GM23248 (cell line): ENCODE measurements at regions of chr3 and their contacts with region 1.

Region 1: GRCh38 chr3:100761211-100761942 is 52.1 kb downstream of the TFG start:
- DNase-seq: no peak
- H3K4me3 ChIP-seq: no peak overlapping the region
- H3K27ac ChIP-seq: no peak overlapping the region
- H3K4me1 ChIP-seq: no peaks in the 10 kb centered on the region
- H3K27me3 ChIP-seq: no peaks in the 10 kb centered on the region

Region 2: GRCh38 chr3:100386437-100387074 is 374.8 kb before region 1 on chr3:
- in situ Hi-C with region 1: no loop called
- DNase-seq: no peak
- H3K4me3 ChIP-seq: no peak overlapping the region
- H3K27ac ChIP-seq: no peak overlapping the region
- H3K4me1 ChIP-seq: peaks cover 21% of the 10 kb centered on the region
- H3K27me3 ChIP-seq: no peaks in the 10 kb centered on the region

Region 3: GRCh38 chr3:101195951-101196713 is 434.8 kb after region 1 on chr3:
- in situ Hi-C with region 1: loop called (anchors 25 kb)
- DNase-seq: peak; percentile 80
- H3K4me3 ChIP-seq: no peak overlapping the region
- H3K27ac ChIP-seq: no peak overlapping the region
- H3K4me1 ChIP-seq: peaks cover 13% of the 10 kb centered on the region; the same call in 1 of the 2 replicates
- H3K27me3 ChIP-seq: no peaks in the 10 kb centered on the region

Region 4: GRCh38 chr3:101391413-101391950 is 630.1 kb after region 1 on chr3:
- in situ Hi-C with region 1: no loop called
- DNase-seq: no peak
- H3K4me3 ChIP-seq: no peak overlapping the region
- H3K27ac ChIP-seq: no peak overlapping the region
- H3K4me1 ChIP-seq: no peaks in the 10 kb centered on the region
- H3K27me3 ChIP-seq: no peaks in the 10 kb centered on the region